Activated CD8-positive, alpha-beta memory T cell treated with anti-CD3 and anti-CD28 coated beads, Interleukin-2, amount 10 ng/mL, durations not matched to agents 7 days and 5 days (primary cell): ENCODE measurements at regions of chr4 and their contacts with region 1.

Region 1: DNA sequence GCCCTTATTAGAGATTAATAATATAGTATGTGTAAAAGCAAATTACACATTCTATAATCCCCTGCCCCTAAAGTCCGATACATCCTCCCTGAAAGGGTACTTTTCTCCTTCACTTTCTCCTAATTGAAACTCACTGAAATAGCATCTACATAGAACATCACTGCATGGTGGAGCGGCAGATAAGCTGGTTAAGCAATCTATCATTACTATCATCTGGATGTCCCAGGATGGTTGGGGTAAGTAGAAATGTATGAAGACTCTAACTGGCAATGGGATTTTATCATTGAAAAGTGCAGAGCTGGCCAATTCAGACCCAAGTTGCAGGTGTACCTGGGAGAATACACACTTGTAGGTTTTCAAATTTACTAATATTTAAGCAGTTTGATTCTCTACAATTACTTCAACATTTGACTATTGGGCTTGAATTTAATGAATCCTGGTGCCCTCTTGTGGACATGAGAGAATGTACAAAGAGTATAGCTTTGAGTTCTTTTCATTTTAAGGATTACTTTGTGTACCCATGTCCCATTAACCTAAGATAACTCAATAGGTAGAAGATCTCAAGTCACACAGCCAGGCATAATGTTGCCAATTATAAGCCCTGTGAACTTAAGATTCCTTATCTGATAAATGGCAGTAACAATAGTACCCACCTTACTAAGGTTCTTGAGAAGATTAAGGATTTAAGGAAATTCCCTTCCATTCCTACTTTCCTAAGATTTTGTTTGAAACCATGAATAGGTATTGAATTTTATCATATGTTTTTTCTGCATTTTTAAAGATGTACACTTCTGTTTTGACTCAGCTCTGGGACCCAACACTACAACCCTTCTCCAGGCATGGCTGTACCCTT is 69.8 kb downstream of the SHROOM3 start:
- DNase-seq: no peak
- ATAC-seq: no peak
- H3K4me3 Mint-ChIP-seq: no peak overlapping the region
- H3K27ac Mint-ChIP-seq: no peak overlapping the region
- H3K4me1 Mint-ChIP-seq: no peaks in the 10 kb centered on the region
- H3K27me3 Mint-ChIP-seq: peaks cover 25% of the 10 kb centered on the region

Region 2: DNA sequence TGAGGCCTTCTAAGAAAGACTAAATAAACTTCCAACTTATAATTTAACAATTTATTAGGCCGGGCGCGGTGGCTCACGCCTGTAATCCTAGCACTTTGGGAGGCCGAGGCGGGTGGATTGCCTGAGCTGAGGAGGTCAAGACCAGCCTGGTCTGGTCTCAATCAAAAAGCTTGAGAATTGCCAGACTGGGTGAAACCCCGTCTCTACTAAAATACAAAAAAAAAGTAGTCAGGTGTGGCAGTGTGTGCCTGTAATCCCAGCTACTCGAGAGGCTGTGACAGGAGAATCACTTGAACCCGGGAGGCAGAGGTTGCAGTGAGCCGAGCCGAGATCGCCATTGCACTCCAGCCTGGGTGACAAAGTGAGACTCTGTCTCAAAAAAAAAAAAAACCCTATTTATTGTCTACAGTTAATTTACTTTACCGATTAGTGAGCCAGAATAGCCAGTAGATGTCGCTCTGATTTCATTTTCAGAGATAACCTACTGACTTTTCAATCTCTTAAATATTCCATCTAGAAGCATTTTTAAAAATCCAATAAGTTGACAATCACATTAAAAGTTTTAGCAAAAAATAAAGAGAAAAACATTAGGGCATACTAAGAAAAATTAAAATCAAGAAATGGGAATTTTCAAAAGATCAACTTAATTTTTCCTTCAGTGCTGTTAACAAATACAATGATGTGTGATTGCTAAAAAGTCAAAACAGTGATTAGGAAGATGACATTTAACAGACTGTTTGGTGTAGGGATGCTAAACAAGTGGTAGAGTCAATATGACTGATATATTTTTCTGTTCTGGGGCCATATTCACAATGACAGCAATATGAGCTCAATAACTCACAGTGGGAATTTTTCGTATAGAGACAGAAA is 74.1 kb before region 1 on chr4:
- CTCF ChIA-PET with region 1: interaction called, 10 read pairs
- DNase-seq: no peak
- ATAC-seq: peak; percentile 47
- H3K4me3 Mint-ChIP-seq: no peak overlapping the region
- H3K27ac Mint-ChIP-seq: no peak overlapping the region
- H3K4me1 Mint-ChIP-seq: peaks cover 2% of the 10 kb centered on the region
- H3K27me3 Mint-ChIP-seq: peaks cover 38% of the 10 kb centered on the region

Region 3: DNA sequence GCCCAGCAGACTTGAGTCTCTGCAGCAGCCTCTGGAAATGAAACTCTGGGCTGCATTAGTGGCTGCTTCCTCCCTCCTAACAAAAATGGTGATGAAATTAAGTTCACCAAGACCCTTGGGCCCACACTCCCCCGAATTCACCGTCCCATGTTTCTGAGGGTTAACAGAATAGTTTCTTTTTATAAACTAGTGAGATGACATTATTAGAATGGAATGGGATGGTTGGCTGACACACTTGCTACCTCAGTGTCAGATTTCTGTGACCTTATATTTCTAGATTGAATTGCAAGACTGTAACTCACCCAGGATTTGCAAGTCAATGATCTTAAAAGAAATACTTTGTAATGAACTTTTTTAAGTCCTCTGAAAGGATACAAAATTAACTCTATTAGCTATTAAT is 57.3 kb after region 1 on chr4:
- CTCF ChIA-PET with region 1: no interaction called
- DNase-seq: no peak
- ATAC-seq: no peak
- H3K4me3 Mint-ChIP-seq: no peak overlapping the region
- H3K27ac Mint-ChIP-seq: no peak overlapping the region
- H3K4me1 Mint-ChIP-seq: peaks cover 9% of the 10 kb centered on the region
- H3K27me3 Mint-ChIP-seq: peaks cover 10% of the 10 kb centered on the region